ENCODE measurements at regions of chr3 and their contacts with region 1.

Region 1: DNA sequence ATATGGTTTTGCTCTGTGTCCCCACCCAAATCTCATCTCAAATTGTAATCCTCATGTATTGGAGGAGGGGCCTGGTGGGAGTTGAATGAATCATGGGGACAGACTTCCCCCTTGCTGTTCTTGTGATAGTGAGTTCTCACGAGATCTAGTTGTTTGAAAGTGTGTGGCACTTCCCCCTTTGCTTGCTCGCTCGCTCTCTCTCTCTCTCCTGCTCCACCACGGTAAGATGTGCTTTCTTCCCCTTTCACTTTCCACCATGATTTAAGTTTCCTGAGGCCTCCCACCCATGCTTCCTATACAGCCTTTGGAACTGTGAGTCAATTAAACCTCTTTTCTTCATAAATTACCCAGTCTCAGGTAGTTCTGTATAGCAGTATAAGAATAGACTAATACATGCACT is 60.7 kb downstream of the GSK3B start:
- DNase-seq: no peak
- H3K4me3 ChIP-seq: no peak overlapping the region
- CTCF ChIP-seq: no peak
- POLR2A ChIP-seq: no peak

Region 2: GRCh38 chr3:120013481-120013880 is 20.1 kb before region 1 on chr3:
- intact Hi-C with region 1: loop called (anchors 1 kb)
- DNase-seq: no peak
- H3K4me3 ChIP-seq: no peak overlapping the region
- CTCF ChIP-seq: no peak
- POLR2A ChIP-seq: no peak

Region 3: GRCh38 chr3:120160050-120160449 is 126.5 kb after region 1 on chr3:
- intact Hi-C with region 1: no loop called
- DNase-seq: peak; percentile 84 to 92
- H3K4me3 ChIP-seq: no peak overlapping the region
- CTCF ChIP-seq: no peak
- POLR2A ChIP-seq: no peak

Measured in lower leg skin (tissue), 4 donors.